Activated CD8-positive, alpha-beta memory T cell treated with anti-CD3 and anti-CD28 coated beads, Interleukin-2, amount 10 ng/mL, durations not matched to agents 7 days and 5 days (primary cell): ENCODE measurements at regions of chr20 and their contacts with region 1.

Region 1: DNA sequence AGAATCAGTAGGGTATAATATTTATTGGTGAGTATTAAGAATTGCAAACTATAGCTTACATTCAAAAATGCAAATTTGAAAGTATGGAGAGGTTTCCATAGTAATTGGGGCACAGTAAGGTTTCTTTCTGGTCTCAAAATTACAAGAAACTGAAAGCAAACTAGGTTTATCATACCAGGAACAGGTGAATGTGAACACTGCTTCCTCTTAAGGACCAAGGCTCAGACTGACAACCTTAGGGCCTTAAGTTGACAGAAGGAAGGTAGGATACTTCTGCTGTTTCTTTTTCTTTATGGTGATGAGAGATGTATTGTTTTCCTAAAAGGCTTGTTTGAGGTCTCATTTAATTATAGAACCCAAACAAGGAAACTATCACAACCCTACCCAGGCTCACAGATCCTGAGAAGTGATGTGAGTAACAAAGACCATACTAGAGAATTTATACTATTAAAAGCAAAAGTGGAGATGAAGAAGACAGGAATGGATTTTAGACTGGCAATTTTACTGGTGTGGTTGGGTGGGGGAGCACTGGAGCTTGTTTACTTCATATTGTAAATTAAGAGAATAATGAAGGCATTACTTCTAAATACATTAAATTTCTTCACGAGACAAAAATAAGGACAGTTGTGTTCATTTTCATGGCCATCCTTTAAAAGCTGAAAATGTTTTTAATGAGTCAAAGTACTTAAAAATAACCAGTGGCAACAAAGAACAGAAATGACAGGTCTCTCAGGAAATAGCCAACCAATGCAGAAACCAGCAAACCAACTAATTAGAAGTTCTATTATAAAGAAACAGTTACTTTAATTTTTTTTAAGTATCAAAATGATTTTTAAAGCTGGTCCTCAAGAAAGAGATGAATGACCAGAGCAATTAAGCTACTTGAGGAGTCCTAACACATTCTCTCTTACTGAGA is 21.3 kb downstream of the STAU1 start:
- DNase-seq: no peak
- ATAC-seq: peak; percentile 94
- H3K4me3 Mint-ChIP-seq: peak overlapping the region; percentile 58
- H3K27ac Mint-ChIP-seq: peak overlapping the region; percentile 87
- H3K4me1 Mint-ChIP-seq: peaks cover 49% of the 10 kb centered on the region
- H3K27me3 Mint-ChIP-seq: no peaks in the 10 kb centered on the region

Region 2: DNA sequence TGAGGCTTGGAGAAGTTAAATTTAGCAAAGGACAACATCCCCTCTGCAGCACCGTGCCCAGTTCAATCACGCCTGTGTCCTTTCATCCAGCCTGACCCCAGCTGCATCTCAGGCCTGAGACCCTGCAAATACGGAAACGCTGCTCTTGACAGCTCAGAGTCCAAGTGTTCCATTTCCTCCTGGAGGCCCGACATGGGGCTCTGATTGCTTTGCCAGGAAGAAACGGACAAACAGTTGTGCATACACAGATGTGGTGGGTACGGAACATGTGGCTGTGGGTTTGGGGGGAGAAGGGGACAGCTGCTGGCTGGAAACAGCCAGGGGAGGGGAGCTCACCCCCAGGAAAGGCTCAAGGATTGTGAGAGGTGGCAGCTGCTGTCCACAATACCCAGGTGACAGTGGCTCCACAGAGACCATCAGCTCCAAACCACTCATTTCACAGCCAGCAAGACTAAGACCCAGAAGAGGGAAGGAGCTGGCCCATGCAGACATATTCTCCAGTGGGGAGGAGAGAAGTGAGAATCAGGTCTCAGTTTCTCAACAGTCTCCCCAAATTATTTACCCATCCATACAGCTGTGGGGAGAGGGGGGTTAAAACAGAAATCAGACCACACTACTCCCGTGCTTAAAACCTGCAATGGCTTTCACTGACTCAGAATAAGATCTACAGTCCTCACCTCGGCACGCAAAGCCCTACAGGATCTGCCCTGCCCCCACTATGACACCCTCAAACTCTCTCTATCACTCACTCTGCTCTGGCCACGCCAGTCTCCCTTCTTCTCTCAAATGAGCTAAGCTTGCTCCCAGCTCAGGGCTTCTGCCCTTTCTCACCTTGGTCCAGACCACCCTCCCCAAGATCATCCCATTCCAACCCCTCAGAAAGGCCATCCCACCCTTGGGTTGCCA is 428.1 kb before region 1 on chr20:
- CTCF ChIA-PET with region 1: no interaction called
- DNase-seq: peak; percentile 94
- ATAC-seq: peak; percentile 88
- H3K4me3 Mint-ChIP-seq: peak overlapping the region; percentile 49
- H3K27ac Mint-ChIP-seq: peak overlapping the region; percentile 94
- H3K4me1 Mint-ChIP-seq: peaks cover 64% of the 10 kb centered on the region
- H3K27me3 Mint-ChIP-seq: no peaks in the 10 kb centered on the region

Region 3: DNA sequence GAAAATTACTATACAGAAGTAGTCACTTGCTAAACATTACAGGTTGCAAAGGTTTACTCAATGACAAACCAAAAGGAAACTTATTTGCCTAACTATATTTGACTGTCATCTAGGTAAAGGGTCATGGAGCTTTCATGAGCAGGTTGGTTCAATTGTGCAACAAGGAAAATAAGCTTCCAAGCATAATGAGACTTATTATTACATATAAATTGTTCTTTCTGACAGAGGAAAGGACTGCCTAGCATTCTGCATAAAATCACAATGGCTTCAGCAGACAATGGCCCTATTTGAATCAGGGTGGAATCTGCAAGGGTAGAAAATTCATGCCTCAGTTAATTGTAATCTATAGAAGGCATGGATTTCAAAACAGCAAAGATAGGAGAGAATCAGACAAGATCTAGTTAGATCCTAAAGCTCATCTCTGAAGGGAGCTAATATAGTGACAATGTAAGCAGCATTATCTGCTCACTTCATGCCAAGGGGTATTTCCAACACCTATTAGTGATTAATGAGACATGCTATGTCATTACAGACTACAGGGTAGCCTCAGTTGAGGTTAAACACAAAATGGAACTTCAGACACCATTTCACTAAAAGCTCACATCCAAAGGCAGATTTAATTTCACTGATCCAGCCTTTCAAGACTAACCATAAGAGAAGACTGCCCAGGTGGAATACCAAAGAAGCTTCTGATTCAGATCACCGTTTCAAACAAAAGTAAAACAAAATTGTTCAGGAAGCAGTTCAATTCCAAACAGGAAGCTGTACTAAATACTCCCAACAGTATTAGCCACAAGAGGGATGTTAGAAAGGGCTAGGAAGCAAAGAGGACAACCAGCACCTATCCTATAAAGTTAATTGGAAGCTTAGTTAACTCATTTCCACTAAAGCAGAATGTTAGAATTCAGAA is 12.8 kb after region 1 on chr20:
- CTCF ChIA-PET with region 1: interaction called, 19 read pairs
- DNase-seq: no peak
- ATAC-seq: no peak
- H3K4me3 Mint-ChIP-seq: no peak overlapping the region
- H3K27ac Mint-ChIP-seq: no peak overlapping the region
- H3K4me1 Mint-ChIP-seq: peaks cover 42% of the 10 kb centered on the region
- H3K27me3 Mint-ChIP-seq: no peaks in the 10 kb centered on the region